ENCODE measurements at regions of chr17 and their contacts with region 1.

Region 1: DNA sequence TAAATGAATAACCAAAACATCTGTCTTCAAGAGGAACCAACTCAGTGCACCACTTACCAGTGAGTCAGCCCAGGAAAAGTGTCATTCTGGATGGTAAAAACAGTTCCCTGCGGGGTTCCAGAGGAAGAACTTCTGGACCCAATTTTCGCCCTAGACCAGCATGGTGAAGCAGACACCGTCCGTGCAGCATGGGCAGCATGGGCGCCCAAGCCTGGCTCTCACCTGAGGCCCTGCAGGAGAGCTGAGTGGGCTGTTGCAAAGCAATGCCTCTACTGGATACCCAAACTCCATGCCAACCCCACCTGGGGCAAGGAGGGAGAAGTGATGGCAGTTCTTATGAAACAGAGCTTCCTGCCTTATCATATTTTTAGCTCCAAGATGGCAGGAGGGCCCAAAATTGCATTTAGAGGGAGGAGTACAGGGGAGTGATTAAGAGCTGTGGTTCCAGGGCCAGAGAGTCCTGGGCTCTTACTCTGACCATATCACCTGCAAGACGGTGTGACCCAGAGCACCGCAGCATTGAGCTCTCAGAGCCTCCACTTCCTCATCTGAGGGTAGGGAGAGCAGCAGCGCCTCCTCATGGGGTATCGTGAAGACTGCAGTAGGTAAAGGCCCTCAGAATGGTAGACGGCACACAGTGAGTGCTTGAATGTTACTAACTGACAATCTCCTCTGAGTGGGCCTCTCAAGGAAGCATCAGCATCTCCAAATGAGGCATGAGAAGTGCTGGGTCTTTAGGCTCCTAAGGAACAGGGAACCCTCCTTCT is 16.6 kb upstream of the INPP5K start:
- DNase-seq: peak; percentile 45
- ATAC-seq: peak; percentile 97
- H3K4me3 Mint-ChIP-seq: no peak overlapping the region
- H3K27ac Mint-ChIP-seq: no peak overlapping the region
- H3K4me1 Mint-ChIP-seq: peaks cover 13% of the 10 kb centered on the region
- H3K27me3 Mint-ChIP-seq: no peaks in the 10 kb centered on the region
- CTCF ChIP-seq: no peak

Region 2: DNA sequence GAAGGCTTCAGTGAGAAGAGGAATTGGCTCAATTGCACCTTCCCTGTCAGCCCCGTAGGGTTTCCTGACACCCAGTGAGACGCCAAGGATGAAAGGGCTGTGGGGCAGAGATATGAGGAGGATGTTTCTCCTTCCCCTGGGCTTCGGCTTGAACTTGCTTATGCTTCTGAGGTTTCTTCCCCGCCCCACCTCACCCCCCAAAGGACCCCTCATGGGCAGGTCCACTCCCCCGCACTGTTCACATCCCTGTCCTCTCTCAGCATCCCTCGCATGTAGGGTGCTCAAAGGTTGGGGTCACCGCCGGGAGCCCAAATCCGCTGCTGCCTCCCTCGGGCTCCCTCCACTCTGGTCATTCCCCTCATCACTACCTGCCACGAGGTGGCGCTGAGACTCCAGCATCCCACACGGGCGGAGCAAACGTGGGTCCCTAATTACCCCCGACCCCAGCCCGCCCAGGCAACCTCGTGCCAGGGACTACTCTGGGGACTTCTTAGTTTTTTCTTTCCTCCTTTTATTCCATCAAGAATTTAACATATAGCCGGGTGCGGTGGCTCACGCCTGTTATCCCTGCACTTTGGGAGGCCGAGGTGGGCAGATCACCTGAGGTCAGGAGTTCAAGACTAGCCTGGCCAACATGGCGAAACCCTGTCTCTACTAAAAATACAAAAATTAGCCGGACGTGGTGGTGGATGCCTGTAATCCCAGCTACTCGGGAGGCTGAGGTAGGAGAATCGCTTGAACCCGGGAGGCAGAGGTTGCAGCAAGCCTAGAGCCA is 256.9 kb before region 1 on chr17:
- CTCF ChIA-PET with region 1: no interaction called
- POLR2A ChIA-PET with region 1: no interaction called
- intact Hi-C with region 1: loop called (anchors 1 kb)
- DNase-seq: peak; percentile 65
- ATAC-seq: peak; percentile 87
- H3K4me3 Mint-ChIP-seq: peak overlapping the region; percentile 65
- H3K27ac Mint-ChIP-seq: no peak overlapping the region
- H3K4me1 Mint-ChIP-seq: peaks cover 12% of the 10 kb centered on the region
- H3K27me3 Mint-ChIP-seq: peaks cover 8% of the 10 kb centered on the region
- CTCF ChIP-seq: peak; percentile 16